Activated B cell treated with CpG ODN at 0.5 μM for 24 hours (primary cell): ENCODE measurements at regions of chr19 and their contacts with region 1.

Region 1: DNA sequence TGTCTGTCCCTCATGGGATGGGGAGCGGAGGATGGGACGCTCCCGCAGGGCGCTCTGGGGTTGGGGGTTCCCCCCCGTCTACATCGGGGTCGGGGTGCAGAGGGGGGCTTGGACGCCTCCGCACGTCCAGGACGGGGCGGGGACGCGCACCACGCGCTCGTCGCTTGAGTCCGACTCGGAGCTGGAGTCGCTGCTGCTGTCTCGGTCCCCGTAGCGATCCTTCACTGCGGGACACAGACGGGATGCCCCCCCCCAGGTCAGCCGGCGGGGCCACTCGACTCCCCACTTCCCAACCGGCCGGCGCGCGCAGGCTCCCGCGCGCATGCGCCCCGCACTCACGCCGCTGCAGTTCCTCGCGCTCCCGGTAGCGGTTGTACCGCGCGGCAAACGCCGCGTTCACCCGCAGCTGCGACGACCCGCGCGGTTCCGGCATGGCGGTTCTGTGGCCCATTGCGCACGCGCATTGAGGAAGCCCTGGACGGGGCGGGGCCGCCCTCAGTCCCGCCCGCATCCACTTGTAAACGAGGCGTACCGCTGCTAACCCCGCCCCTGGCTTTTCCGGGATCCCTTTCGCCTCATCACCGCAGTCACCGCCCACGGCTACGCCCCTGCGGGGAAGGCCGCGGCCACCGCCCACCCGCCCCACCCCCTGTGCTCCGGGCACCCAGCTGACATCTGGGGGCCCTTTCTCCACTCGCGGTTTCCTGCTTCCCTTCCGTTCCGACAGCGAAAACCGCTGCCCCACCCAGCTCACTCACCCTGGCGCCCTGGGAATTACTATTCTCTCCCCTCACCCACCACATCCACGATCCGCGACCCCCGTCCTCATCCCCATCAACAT is at the start of gene KRI1:
- DNase-seq: peak; percentile 99
- ATAC-seq: peak; percentile 64
- H3K4me3 Mint-ChIP-seq: peak within 1 kb of the TSS; percentile 95
- H3K27ac Mint-ChIP-seq: peak within 1 kb of the TSS; percentile 98
- H3K4me1 Mint-ChIP-seq: peaks cover 46% of the 10 kb centered on the region
- H3K27me3 Mint-ChIP-seq: no peaks in the 10 kb centered on the region
- CTCF ChIP-seq: no peak
- total RNA-seq, gene KRI1: 44.7 and 48.1 TPM in 2 replicates

Region 2: GRCh38 chr19:10194500-10195289 is 371.1 kb before region 1 on chr19 and contains the start of gene DNMT1:
- CTCF ChIA-PET with region 1: no interaction called
- POLR2A ChIA-PET with region 1: no interaction called
- intact Hi-C with region 1: loop called (anchors 2 kb)
- DNase-seq: peak; percentile 94
- ATAC-seq: peak; percentile 97
- H3K4me3 Mint-ChIP-seq: peak within 1 kb of the TSS; percentile 94
- H3K27ac Mint-ChIP-seq: peak within 1 kb of the TSS; percentile 89
- H3K4me1 Mint-ChIP-seq: peaks cover 34% of the 10 kb centered on the region
- H3K27me3 Mint-ChIP-seq: no peaks in the 10 kb centered on the region
- CTCF ChIP-seq: no peak
- total RNA-seq, gene DNMT1: 136 and 156 TPM in 2 replicates

Region 3: GRCh38 chr19:10403137-10404021 is 162.4 kb before region 1 on chr19 and contains the start of gene CDC37:
- CTCF ChIA-PET with region 1: no interaction called
- POLR2A ChIA-PET with region 1: interaction called, 7 read pairs
- intact Hi-C with region 1: loop called (anchors 1 kb)
- DNase-seq: peak; percentile 99
- ATAC-seq: peak; percentile 80
- H3K4me3 Mint-ChIP-seq: peak within 1 kb of the TSS; percentile 95
- H3K27ac Mint-ChIP-seq: peak within 1 kb of the TSS; percentile 85
- H3K4me1 Mint-ChIP-seq: peaks cover 75% of the 10 kb centered on the region
- H3K27me3 Mint-ChIP-seq: no peaks in the 10 kb centered on the region
- CTCF ChIP-seq: no peak
- total RNA-seq, gene CDC37: 172 and 173 TPM in 2 replicates

Region 4: GRCh38 chr19:10502524-10503001 is 63.2 kb before region 1 on chr19:
- CTCF ChIA-PET with region 1: interaction called, 3 read pairs
- POLR2A ChIA-PET with region 1: interaction called, 4 read pairs
- intact Hi-C with region 1: loop called (anchors 1 kb)
- DNase-seq: peak; percentile 90
- ATAC-seq: peak; percentile 91
- H3K4me3 Mint-ChIP-seq: peak overlapping the region; percentile 87
- H3K27ac Mint-ChIP-seq: peak overlapping the region; percentile 90
- H3K4me1 Mint-ChIP-seq: peaks cover 23% of the 10 kb centered on the region
- H3K27me3 Mint-ChIP-seq: no peaks in the 10 kb centered on the region
- CTCF ChIP-seq: no peak

Region 5: GRCh38 chr19:10602330-10603083 is 36.7 kb after region 1 on chr19:
- CTCF ChIA-PET with region 1: no interaction called
- POLR2A ChIA-PET with region 1: interaction called, 13 read pairs
- intact Hi-C with region 1: loop called (anchors 1 kb)
- DNase-seq: peak; percentile 86
- ATAC-seq: peak; percentile 73
- H3K4me3 Mint-ChIP-seq: peak overlapping the region; percentile 97
- H3K27ac Mint-ChIP-seq: peak overlapping the region; percentile 98
- H3K4me1 Mint-ChIP-seq: peaks cover 39% of the 10 kb centered on the region
- H3K27me3 Mint-ChIP-seq: no peaks in the 10 kb centered on the region
- CTCF ChIP-seq: no peak

Region 6: GRCh38 chr19:10625003-10625776 is 59.4 kb after region 1 on chr19 and contains the start of gene SLC44A2:
- CTCF ChIA-PET with region 1: no interaction called
- POLR2A ChIA-PET with region 1: no interaction called
- intact Hi-C with region 1: no loop called
- DNase-seq: no peak
- ATAC-seq: no peak
- H3K4me3 Mint-ChIP-seq: peak within 1 kb of the TSS; percentile 16
- H3K27ac Mint-ChIP-seq: peak within 1 kb of the TSS; percentile 46
- H3K4me1 Mint-ChIP-seq: peaks cover 37% of the 10 kb centered on the region
- H3K27me3 Mint-ChIP-seq: no peaks in the 10 kb centered on the region
- CTCF ChIP-seq: no peak
- total RNA-seq, gene SLC44A2: 195 and 213 TPM in 2 replicates

Region 7: GRCh38 chr19:10695401-10696398 is 129.9 kb after region 1 on chr19:
- CTCF ChIA-PET with region 1: interaction called, 3 read pairs
- POLR2A ChIA-PET with region 1: no interaction called
- intact Hi-C with region 1: loop called (anchors 5 kb)
- DNase-seq: peak; percentile 79
- ATAC-seq: peak; percentile 98
- H3K4me3 Mint-ChIP-seq: peak overlapping the region; percentile 76
- H3K27ac Mint-ChIP-seq: peak overlapping the region; percentile 26
- H3K4me1 Mint-ChIP-seq: peaks cover 17% of the 10 kb centered on the region
- H3K27me3 Mint-ChIP-seq: peaks cover 5% of the 10 kb centered on the region
- CTCF ChIP-seq: no peak